ENCODE measurements at regions of chr6 and their contacts with region 1.

Region 1: GRCh38 chr6:140867336-140867735 is 1265.4 kb upstream of the GJE1 start:
- DNase-seq: peak; percentile 15
- H3K4me3 ChIP-seq: no peak overlapping the region
- H3K27ac ChIP-seq: no peak overlapping the region
- H3K4me1 ChIP-seq: no peaks in the 10 kb centered on the region
- H3K27me3 ChIP-seq: no peaks in the 10 kb centered on the region
- CTCF ChIP-seq: no peak

Region 2: DNA sequence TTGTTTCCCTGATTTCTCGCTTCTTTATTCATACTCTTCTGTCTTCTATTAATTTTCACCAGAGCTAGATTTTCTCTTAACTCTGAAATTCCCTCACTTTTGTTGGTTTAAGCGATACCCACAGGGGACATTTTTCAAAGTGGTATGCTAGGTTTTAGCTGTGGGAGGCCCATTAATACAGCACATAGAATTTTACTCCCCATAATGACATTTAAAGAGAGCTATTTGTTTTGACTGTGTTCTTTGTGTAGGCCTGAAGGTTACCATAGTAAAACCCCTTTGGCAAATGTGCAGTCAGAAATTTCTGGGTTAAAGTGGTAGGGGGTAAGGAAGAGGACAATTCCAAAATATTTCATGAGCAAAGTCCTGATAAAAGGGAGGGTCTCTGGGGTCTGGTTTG is 771.8 kb before region 1 on chr6:
- CTCF ChIA-PET with region 1: no interaction called
- POLR2A ChIA-PET with region 1: no interaction called
- intact Hi-C with region 1: no loop called
- DNase-seq: peak; percentile 53
- H3K4me3 ChIP-seq: no peak overlapping the region
- H3K27ac ChIP-seq: peak overlapping the region; percentile 1
- H3K4me1 ChIP-seq: peaks cover 15% of the 10 kb centered on the region
- H3K27me3 ChIP-seq: no peaks in the 10 kb centered on the region
- CTCF ChIP-seq: no peak

Region 3: GRCh38 chr6:140879946-140880345 is 12.6 kb after region 1 on chr6:
- CTCF ChIA-PET with region 1: no interaction called
- POLR2A ChIA-PET with region 1: no interaction called
- intact Hi-C with region 1: loop called (anchors 2 kb)
- DNase-seq: no peak
- H3K4me3 ChIP-seq: no peak overlapping the region
- H3K27ac ChIP-seq: no peak overlapping the region
- H3K4me1 ChIP-seq: no peaks in the 10 kb centered on the region
- H3K27me3 ChIP-seq: no peaks in the 10 kb centered on the region
- CTCF ChIP-seq: no peak

Region 4: DNA sequence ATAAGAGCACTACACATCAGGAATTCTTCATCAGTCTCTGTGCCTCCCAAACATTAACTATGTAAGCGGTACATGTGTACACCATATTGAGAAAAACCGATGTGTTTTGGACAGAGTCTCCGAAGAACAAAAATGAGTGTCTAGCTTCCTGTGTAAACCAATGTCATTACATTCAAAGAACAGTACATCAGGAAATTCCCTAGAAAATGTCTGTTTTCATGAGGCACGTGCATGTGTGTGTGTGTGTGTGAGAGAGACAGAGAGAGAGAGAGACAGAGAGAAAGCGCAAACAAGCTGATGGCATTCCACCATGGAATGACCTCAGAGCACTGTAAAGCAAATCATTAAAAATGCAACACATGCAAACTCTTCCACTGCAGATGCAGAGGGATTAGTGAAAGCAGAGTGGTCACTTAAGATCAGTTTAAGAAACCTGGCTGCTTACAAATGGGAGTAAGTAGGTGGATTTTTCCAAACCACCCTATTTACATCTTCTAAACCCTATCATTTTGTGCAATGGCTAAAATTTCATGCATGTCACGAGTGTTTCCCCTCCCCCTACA is 1943.7 kb after region 1 on chr6:
- CTCF ChIA-PET with region 1: no interaction called
- POLR2A ChIA-PET with region 1: no interaction called
- intact Hi-C with region 1: no loop called
- DNase-seq: no peak
- H3K4me3 ChIP-seq: no peak overlapping the region
- H3K27ac ChIP-seq: no peak overlapping the region
- H3K4me1 ChIP-seq: no peaks in the 10 kb centered on the region
- H3K27me3 ChIP-seq: no peaks in the 10 kb centered on the region
- CTCF ChIP-seq: no peak